K562 (cell line): ENCODE measurements at regions of chr18 and their contacts with region 1.

Region 1: GRCh38 chr18:11980555-11981382 is 538 bp upstream of the IMPA2 start:
- DNase-seq: peak; percentile 95 to 97 (median 97)
- ATAC-seq: peak; percentile 92
- H3K4me3 ChIP-seq: peak overlapping the region; percentile 73
- H3K27ac ChIP-seq: peak overlapping the region; percentile 83
- H3K4me1 ChIP-seq: peaks cover 13 to 19% of the 10 kb centered on the region in 2 experiments
- H3K27me3 ChIP-seq: no peaks in the 10 kb centered on the region
- CTCF ChIP-seq: peak in 2 of 3 experiments; percentile 28 to 45; a peak in 2 of 6 replicates
- EP300 ChIP-seq: 0 out of 2 replicates have a peak, but pooled peaks have one; percentile 9
- POLR2A ChIP-seq: peak; percentile 87
- RAD21 ChIP-seq: peak in 1 of 2 experiments; percentile 54; a peak in 2 of 4 replicates

Region 2: GRCh38 chr18:11947214-11948191 is 33.3 kb before region 1 on chr18:
- CTCF ChIA-PET with region 1: no interaction called
- POLR2A ChIA-PET with region 1: interaction called, 15 read pairs
- in situ Hi-C with region 1: no loop called
- intact Hi-C with region 1: loop called (anchors 2 kb)
- DNase-seq: peak; percentile 79 to 99 (median 82)
- ATAC-seq: peak; percentile 91
- H3K4me3 ChIP-seq: peak overlapping the region; percentile 50
- H3K27ac ChIP-seq: peak overlapping the region; percentile 92
- H3K4me1 ChIP-seq: peaks cover 30 to 34% of the 10 kb centered on the region in 2 experiments
- H3K27me3 ChIP-seq: no peaks in the 10 kb centered on the region
- CTCF ChIP-seq: peak in 2 of 3 experiments; percentile 10; a peak in 1 of 6 replicates
- EP300 ChIP-seq: peak; percentile 90
- POLR2A ChIP-seq: peak; percentile 83
- RAD21 ChIP-seq: peak in 1 of 2 experiments; percentile 36; a peak in 1 of 4 replicates

Region 3: GRCh38 chr18:12092398-12093229 is 111.8 kb after region 1 on chr18:
- CTCF ChIA-PET with region 1: no interaction called
- POLR2A ChIA-PET with region 1: no interaction called
- in situ Hi-C with region 1: no loop called
- intact Hi-C with region 1: no loop called
- DNase-seq: peak; percentile 25 to 72 (median 44)
- ATAC-seq: peak; percentile 97
- H3K4me3 ChIP-seq: no peak overlapping the region
- H3K27ac ChIP-seq: no peak overlapping the region
- H3K4me1 ChIP-seq: peaks cover 0 to 7% of the 10 kb centered on the region in 2 experiments; a peak in 2 of 5 replicates
- H3K27me3 ChIP-seq: no peaks in the 10 kb centered on the region; a peak in 1 of 5 replicates
- CTCF ChIP-seq: peak; percentile 76 to 88 (median 83)
- EP300 ChIP-seq: no peak
- POLR2A ChIP-seq: no peak
- RAD21 ChIP-seq: peak; percentile 85 to 93